ENCODE measurements at regions of chr12 and their contacts with region 1.

Region 1: GRCh38 chr12:132908145-132909044 is 21.0 kb upstream of the CHFR start:
- DNase-seq: peak; percentile 96 to 99
- ATAC-seq: peak; percentile 96 to 99 (median 97)
- H3K4me3 ChIP-seq: peak overlapping the region; percentile 50 to 84 (median 63)
- H3K27ac ChIP-seq: peak overlapping the region; percentile 17 to 84 (median 68)
- H3K4me1 ChIP-seq: peaks cover 0 to 26% (median 10%) of the 10 kb centered on the region in 9 donors
- H3K27me3 ChIP-seq: peaks cover 0 to 50% (median 8%) of the 10 kb centered on the region in 7 donors
- CTCF ChIP-seq: no peak

Region 2: DNA sequence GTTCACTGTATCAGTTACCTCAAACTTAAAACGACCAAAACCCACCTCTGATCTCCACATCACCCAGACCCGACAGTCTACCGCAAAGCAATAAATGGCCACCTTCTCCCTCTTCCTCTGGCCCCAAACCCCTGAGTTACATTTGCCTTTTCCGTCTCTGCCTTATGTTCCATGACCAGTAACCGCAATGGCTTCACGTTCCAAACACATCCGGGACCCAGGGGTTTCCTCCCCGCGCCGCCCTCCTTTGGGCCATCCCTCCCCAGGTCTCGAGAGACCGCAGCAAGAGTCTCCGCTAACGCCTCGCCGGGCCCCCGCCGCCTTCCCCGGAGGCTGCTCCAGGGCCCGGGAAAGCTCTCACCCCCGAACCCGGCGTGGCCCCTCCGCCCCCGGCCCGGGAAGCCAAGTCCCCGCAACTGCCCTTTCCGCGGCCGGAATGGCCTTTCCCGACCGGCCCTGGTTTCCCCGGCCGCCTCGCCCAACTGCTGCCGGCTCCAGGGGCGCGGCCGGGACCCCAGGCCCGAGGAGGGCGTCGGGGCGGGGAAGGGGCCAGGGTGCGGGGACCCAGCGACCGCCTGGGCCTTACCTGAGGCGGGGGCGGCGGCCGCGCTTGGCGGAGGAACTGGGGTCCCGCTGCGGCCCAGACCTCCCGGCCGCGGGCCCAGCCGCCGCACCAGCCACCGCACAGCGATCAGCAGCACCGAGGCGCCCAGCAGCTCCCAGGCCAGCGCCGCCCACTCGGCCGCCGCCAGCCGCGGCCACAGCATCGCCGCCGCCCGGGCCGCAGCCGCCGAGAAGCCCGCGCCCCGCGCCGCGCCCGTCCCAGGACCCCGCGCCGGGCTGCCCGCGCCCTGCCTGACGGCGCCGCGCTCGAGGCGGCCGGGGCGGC is 147.1 kb before region 1 on chr12 and contains the start of gene ANKLE2:
- intact Hi-C with region 1: loop called in 1 of 10 experiments (anchors 10 kb)
- DNase-seq: peak; percentile 46 to 55
- ATAC-seq: peak; percentile 16 to 42 (median 32)
- H3K4me3 ChIP-seq: peak within 1 kb of the TSS; percentile 85 to 98 (median 96)
- H3K27ac ChIP-seq: peak within 1 kb of the TSS; percentile 86 to 100 (median 98)
- H3K4me1 ChIP-seq: peaks cover 2 to 40% (median 29%) of the 10 kb centered on the region in 9 donors
- H3K27me3 ChIP-seq: no peaks in the 10 kb centered on the region
- CTCF ChIP-seq: no peak
- total RNA-seq, gene ANKLE2: 23.5 to 39.4 (median 30.5) TPM

Region 3: DNA sequence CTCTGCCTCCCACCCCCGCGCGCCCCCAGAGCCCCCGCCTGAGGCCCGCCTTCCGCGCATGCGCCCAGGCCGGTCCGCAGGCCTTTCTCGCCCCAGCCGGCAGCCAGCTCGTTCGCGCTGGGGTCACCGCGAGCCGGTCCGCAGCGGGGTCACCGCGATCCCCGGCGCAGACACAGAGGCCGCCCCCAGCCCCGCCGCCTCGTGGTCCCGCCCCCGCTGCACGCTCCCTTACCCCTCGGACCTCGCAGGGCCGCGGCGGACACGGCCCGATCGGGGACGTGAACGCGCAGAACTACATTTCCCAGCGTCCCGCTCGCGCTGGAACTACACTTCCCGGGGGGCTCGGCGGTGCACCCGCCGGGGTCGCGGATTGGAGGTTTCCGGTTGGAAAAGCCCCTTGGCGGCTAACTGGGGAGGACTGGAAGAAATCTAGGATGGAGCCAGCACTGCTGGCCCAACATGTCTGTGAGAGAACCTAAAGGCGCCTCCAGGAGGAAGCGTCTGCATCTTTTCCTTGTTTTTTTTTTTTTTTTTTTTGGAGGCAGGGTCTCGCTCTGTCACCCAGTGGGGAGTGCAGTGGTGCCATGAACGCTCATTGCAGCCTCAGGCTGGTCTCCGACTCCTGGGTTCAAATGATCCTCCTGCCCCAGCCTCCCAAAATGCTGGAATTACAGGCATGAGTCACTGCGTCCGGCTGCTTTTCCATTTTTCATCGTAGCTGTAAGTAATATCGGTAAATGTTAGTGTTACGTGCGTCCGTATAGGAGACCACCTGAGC is 47.8 kb after region 1 on chr12 and contains the start of gene ZNF605:
- intact Hi-C with region 1: loop called in 1 of 10 experiments (anchors 10 kb)
- DNase-seq: peak; percentile 91 to 93
- ATAC-seq: peak; percentile 93 to 97 (median 96)
- H3K4me3 ChIP-seq: peak within 1 kb of the TSS; percentile 57 to 95 (median 82)
- H3K27ac ChIP-seq: peak within 1 kb of the TSS; percentile 59 to 98 (median 96)
- H3K4me1 ChIP-seq: peaks cover 0 to 26% (median 17%) of the 10 kb centered on the region in 9 donors
- H3K27me3 ChIP-seq: no peaks in the 10 kb centered on the region
- CTCF ChIP-seq: no peak
- total RNA-seq, gene ZNF605: 9.3 to 14.4 (median 12.3) TPM